ENCODE measurements at regions of chr14 and their contacts with region 1.

Region 1: GRCh38 chr14:23588884-23589598 is 10.5 kb upstream of the JPH4 start:
- DNase-seq: peak; percentile 89
- CTCF ChIP-seq: peak; percentile 86

Region 2: DNA sequence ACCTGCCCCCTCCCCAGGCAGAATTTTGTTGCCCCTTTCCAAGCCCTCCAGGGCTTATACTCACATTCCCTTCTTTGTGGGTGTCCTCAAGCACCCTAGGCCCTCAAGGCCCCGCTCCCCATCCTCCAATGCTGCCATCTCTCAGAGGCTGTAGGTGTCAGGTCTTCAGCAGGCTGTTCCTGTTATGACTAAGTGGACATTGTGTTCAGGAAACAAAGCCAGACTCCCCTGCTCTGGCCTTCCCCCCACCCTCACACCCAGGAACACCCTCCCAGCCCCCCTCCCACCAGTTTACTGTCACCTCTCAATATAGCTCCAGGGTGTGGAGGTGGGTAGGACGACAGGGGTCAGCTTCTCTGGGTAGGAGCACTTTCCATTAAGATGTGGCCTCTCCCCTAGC is 179.6 kb before region 1 on chr14:
- CTCF ChIA-PET with region 1: no interaction called
- POLR2A ChIA-PET with region 1: no interaction called
- DNase-seq: peak; percentile 66
- CTCF ChIP-seq: no peak

Region 3: GRCh38 chr14:23568600-23569310 is 20.3 kb before region 1 on chr14:
- CTCF ChIA-PET with region 1: interaction called, 12 read pairs
- POLR2A ChIA-PET with region 1: interaction called, 4 read pairs
- DNase-seq: no peak
- CTCF ChIP-seq: peak; percentile 51

Region 4: DNA sequence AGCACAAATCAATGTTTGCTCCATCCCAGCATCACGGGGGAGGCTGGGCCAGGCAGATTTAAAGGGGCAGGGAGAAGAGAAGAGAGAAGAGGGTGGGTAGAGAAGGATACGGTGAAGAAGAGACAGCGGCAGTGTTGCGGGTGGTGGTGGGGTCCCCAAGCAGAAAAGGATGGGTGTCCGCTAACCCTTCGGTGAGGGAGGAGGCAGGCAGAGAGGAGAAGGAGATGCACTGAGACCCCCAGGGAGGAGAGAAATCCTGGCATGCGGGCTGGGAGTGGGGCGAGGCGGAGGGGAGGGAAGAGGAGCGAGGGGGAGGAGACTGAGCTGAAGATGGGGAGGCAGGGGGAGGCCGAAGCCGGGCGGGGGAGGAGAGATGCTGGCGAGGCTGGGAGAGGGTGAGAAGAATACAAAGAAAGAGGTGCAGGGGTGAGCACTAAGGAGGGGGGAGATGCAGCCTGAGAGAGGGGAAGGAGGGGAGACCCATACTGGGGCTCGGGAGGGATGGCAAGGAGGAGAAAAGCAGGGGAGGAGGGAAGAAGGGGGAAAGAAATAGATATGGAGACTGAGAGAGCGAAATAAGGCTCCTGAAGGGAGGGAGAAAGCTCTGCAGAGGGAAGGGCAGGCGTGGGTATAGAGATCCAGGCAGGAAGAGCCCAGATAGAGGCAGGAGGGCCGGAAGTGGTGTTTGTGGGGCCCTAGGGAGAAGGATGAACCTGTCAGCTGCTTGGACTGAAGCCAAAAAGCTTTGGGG is 10.3 kb before region 1 on chr14 and contains the start of gene JPH4:
- CTCF ChIA-PET with region 1: interaction called, 12 read pairs
- POLR2A ChIA-PET with region 1: interaction called, 3 read pairs
- DNase-seq: no peak
- CTCF ChIP-seq: no peak

Region 5: DNA sequence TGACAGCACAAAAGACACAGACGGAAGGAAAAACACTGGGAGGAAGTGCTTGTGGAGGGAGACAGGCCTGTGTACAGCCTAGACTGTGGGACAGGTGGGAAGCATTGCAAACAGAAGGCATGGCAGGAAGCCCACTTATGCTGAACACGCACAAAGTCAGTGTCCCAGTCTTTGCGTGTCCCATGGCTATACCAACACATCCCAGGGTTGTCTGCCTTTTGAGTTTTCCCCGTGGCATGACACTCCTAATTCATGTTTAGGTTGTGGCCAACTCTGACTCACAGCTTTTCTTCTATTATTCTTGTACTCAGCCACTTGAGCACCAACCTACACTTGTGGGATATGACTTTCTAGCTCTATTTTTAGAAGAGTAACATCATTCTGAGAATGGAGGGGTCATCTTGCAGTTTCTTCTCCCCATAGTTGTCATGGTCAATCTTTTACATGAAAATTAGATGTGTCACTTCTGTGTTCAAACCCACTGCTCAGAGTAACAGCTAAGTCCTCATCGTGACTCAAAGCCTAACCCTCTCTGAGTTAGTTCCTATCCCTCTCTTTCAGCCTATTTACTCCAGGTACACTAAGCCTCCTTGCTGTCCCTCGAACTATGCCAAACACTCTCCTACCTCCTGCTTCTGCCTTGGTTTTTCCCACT is 17.0 kb after region 1 on chr14:
- CTCF ChIA-PET with region 1: interaction called, 95 read pairs
- POLR2A ChIA-PET with region 1: interaction called, 3 read pairs
- DNase-seq: peak; percentile 76
- CTCF ChIP-seq: no peak

Region 6: GRCh38 chr14:23916004-23916403 is 327.0 kb after region 1 on chr14:
- CTCF ChIA-PET with region 1: interaction called, 46 read pairs
- POLR2A ChIA-PET with region 1: no interaction called
- DNase-seq: no peak
- CTCF ChIP-seq: no peak

Region 7: GRCh38 chr14:23929822-23930294 is 340.8 kb after region 1 on chr14:
- CTCF ChIA-PET with region 1: interaction called, 51 read pairs
- POLR2A ChIA-PET with region 1: no interaction called
- DNase-seq: peak; percentile 81
- CTCF ChIP-seq: peak; percentile 81

Measured in GM10248 (cell line).